ENCODE measurements at regions of chr18 and their contacts with region 1.

Region 1: GRCh38 chr18:21012308-21012707 is 99.3 kb downstream of the ROCK1 start:
- DNase-seq: peak in 1 of 14 experiments; percentile 9
- ATAC-seq: no peak
- H3K4me3 ChIP-seq: no peak overlapping the region
- H3K4me3 Mint-ChIP-seq: no peak overlapping the region
- H3K27ac ChIP-seq: no peak overlapping the region
- H3K27ac Mint-ChIP-seq: no peak overlapping the region
- H3K4me1 ChIP-seq: no peaks in the 10 kb centered on the region
- H3K4me1 Mint-ChIP-seq: peaks cover 18% of the 10 kb centered on the region
- H3K27me3 ChIP-seq: no peaks in the 10 kb centered on the region
- H3K27me3 Mint-ChIP-seq: no peaks in the 10 kb centered on the region
- CTCF ChIP-seq: no peak

Region 2: GRCh38 chr18:20966795-20967194 is 45.5 kb before region 1 on chr18:
- CTCF ChIA-PET with region 1: no interaction called
- POLR2A ChIA-PET with region 1: no interaction called
- intact Hi-C with region 1: loop called in 1 of 2 experiments (anchors 10 kb)
- DNase-seq: no peak
- ATAC-seq: no peak
- H3K4me3 ChIP-seq: no peak overlapping the region
- H3K4me3 Mint-ChIP-seq: no peak overlapping the region
- H3K27ac ChIP-seq: no peak overlapping the region
- H3K27ac Mint-ChIP-seq: no peak overlapping the region
- H3K4me1 ChIP-seq: no peaks in the 10 kb centered on the region
- H3K4me1 Mint-ChIP-seq: peaks cover 1% of the 10 kb centered on the region
- H3K27me3 ChIP-seq: no peaks in the 10 kb centered on the region
- H3K27me3 Mint-ChIP-seq: no peaks in the 10 kb centered on the region
- CTCF ChIP-seq: no peak

Region 3: DNA sequence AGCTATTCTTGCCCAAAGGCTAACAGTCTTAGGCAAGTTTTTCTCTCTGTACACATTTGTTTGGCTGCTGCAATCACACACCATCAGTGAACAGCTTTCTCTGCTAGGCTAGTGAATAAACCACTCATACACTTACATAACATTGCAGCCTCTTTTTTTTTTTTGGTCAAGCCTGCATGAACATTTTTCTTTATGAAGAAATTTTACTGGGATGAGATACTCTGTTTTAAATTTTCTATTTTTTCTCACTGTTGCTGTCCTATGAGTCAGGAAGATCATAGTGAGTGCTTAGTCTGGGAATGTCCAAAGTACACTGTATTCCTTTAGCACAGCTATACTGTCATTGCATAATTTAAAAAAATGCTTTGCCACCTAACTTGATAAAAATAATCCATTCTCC is 40.8 kb after region 1 on chr18:
- CTCF ChIA-PET with region 1: no interaction called
- POLR2A ChIA-PET with region 1: interaction called, 3 read pairs
- intact Hi-C with region 1: loop called in 1 of 2 experiments (anchors 5 kb)
- DNase-seq: no peak
- ATAC-seq: no peak
- H3K4me3 ChIP-seq: no peak overlapping the region
- H3K4me3 Mint-ChIP-seq: no peak overlapping the region
- H3K27ac ChIP-seq: no peak overlapping the region
- H3K27ac Mint-ChIP-seq: peak overlapping the region; percentile 9
- H3K4me1 ChIP-seq: peaks cover 7% of the 10 kb centered on the region
- H3K4me1 Mint-ChIP-seq: peaks cover 49% of the 10 kb centered on the region
- H3K27me3 ChIP-seq: no peaks in the 10 kb centered on the region
- H3K27me3 Mint-ChIP-seq: no peaks in the 10 kb centered on the region
- CTCF ChIP-seq: no peak

Region 4: GRCh38 chr18:21115519-21116411 is 103.5 kb after region 1 on chr18:
- CTCF ChIA-PET with region 1: no interaction called
- POLR2A ChIA-PET with region 1: no interaction called
- intact Hi-C with region 1: no loop called
- DNase-seq: no peak
- ATAC-seq: no peak
- H3K4me3 ChIP-seq: no peak overlapping the region
- H3K4me3 Mint-ChIP-seq: no peak overlapping the region
- H3K27ac ChIP-seq: no peak overlapping the region
- H3K27ac Mint-ChIP-seq: no peak overlapping the region
- H3K4me1 ChIP-seq: peaks cover 5% of the 10 kb centered on the region
- H3K4me1 Mint-ChIP-seq: peaks cover 7% of the 10 kb centered on the region
- H3K27me3 ChIP-seq: no peaks in the 10 kb centered on the region
- H3K27me3 Mint-ChIP-seq: no peaks in the 10 kb centered on the region
- CTCF ChIP-seq: no peak

Measured in CD4-positive, alpha-beta T cell (primary cell).